Aorta (tissue), 5 donors: ENCODE measurements at regions of chr18 and their contacts with region 1.

Region 1: DNA sequence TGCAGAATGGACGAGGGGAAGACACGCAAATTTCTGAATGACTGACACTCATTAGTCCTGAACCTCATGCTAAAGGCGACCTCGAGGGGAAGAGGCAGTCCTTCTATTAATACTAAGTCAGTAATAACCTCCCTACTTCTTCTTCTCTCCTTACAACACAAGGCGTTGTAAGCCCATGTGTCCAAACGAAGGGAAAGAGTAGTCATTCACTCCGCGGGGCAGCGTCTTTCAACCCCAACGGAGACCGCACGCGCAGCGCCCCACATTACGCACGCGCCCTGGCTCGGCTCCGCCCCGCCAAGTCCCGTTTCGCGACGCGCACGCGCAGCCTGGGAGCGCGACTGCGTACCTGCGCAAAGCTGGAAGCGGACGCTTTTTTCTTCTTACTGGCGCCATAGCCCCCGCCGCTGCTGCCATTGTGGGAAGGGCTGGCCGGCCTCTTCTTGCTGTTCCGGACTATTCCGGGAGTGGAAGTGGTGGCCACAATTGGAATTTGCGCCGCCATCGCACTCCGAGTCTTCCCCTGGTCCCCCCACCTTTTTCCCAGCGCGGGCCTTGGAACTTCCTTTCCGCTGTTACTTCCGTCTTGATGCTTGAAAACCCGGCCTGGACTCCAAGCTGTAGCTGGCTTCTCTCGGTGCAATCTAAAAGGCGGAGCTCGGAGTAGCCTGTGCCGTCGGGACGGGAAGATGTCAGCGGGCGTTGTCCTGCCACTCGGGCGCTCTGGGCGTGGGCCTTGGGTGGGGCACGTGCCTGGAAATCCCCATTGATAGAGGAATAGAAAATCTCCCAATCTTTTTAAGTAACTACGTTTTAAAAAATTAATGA is at the start of gene INO80C:
- DNase-seq: peak; percentile 95 to 98
- ATAC-seq: peak; percentile 98
- H3K4me3 ChIP-seq: peak within 1 kb of the TSS; percentile 38 to 46
- H3K27ac ChIP-seq: peak within 1 kb of the TSS; percentile 57 to 88
- H3K4me1 ChIP-seq: peaks cover 2% of the 10 kb centered on the region in 2 donors
- H3K27me3 ChIP-seq: no peaks in the 10 kb centered on the region
- total RNA-seq, gene INO80C: 18.6 to 19.1 TPM

Region 2: GRCh38 chr18:35407871-35408481 is 89.6 kb before region 1 on chr18:
- intact Hi-C with region 1: loop called in 1 of 2 experiments (anchors 5 kb)
- DNase-seq: no peak
- ATAC-seq: peak; percentile 83
- H3K4me3 ChIP-seq: no peak overlapping the region
- H3K27ac ChIP-seq: no peak overlapping the region
- H3K4me1 ChIP-seq: no peaks in the 10 kb centered on the region
- H3K27me3 ChIP-seq: no peaks in the 10 kb centered on the region

Region 3: DNA sequence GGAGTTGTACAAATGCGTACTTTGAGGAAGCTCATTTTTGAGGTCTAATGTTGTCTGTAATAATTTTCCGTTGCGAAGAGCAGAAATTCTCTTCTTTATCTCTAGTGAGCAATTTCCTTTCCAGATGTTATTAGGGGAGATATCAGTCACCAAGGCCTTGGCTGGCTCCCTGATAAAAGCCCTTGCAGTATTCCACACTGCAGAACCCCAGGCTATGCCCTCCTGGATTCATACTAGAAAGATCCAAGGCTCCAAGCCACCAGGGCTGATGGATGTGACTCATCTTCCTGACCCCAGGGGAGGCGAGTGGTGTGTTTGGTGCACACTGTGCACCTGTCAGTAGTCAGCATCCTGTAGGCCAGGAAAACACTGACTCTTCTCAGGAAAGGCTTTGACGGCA is 34.5 kb before region 1 on chr18:
- intact Hi-C with region 1: loop called in 1 of 2 experiments (anchors 5 kb)
- DNase-seq: no peak
- ATAC-seq: no peak
- H3K4me3 ChIP-seq: no peak overlapping the region
- H3K27ac ChIP-seq: no peak overlapping the region
- H3K4me1 ChIP-seq: peaks cover 0 to 11% of the 10 kb centered on the region in 2 donors
- H3K27me3 ChIP-seq: no peaks in the 10 kb centered on the region

Region 4: GRCh38 chr18:35580701-35581539 is 83.3 kb after region 1 on chr18:
- intact Hi-C with region 1: loop called in 1 of 2 experiments (anchors 1 kb)
- DNase-seq: peak; percentile 77 to 87
- ATAC-seq: peak; percentile 85
- H3K4me3 ChIP-seq: peak overlapping the region; percentile 68 to 99
- H3K27ac ChIP-seq: peak overlapping the region; percentile 87 to 99
- H3K4me1 ChIP-seq: no peaks in the 10 kb centered on the region
- H3K27me3 ChIP-seq: no peaks in the 10 kb centered on the region

Region 5: GRCh38 chr18:35590935-35591334 is 93.4 kb after region 1 on chr18:
- intact Hi-C with region 1: no loop called
- DNase-seq: no peak
- ATAC-seq: no peak
- H3K4me3 ChIP-seq: no peak overlapping the region
- H3K27ac ChIP-seq: no peak overlapping the region
- H3K4me1 ChIP-seq: no peaks in the 10 kb centered on the region
- H3K27me3 ChIP-seq: no peaks in the 10 kb centered on the region